AG04449 (cell line): ENCODE measurements at regions of chr10 and their contacts with region 1.

Region 1: DNA sequence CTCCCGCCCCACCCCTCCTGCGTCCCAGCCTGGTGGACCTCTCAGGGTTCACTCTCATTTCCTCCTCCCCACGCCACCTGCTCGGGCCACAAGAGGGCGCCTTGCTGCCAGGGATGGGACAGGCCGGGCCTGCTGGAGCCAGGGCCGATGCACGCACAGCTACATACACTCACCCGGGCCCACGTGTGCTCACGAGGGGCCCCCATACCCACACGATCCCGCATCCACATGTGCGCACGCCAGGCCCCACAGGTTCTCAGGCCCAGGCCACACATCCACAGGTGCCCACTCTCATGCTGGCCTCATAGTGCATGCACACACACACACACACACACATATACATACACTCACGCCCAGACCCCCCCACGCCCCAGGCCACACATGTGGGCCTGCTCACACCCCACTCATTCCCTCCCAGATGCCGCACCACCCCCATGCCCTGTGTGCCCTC is 68.6 kb downstream of the LHPP start:
- DNase-seq: peak; percentile 17
- H3K4me3 ChIP-seq: no peak overlapping the region
- CTCF ChIP-seq: peak; percentile 98

Region 2: DNA sequence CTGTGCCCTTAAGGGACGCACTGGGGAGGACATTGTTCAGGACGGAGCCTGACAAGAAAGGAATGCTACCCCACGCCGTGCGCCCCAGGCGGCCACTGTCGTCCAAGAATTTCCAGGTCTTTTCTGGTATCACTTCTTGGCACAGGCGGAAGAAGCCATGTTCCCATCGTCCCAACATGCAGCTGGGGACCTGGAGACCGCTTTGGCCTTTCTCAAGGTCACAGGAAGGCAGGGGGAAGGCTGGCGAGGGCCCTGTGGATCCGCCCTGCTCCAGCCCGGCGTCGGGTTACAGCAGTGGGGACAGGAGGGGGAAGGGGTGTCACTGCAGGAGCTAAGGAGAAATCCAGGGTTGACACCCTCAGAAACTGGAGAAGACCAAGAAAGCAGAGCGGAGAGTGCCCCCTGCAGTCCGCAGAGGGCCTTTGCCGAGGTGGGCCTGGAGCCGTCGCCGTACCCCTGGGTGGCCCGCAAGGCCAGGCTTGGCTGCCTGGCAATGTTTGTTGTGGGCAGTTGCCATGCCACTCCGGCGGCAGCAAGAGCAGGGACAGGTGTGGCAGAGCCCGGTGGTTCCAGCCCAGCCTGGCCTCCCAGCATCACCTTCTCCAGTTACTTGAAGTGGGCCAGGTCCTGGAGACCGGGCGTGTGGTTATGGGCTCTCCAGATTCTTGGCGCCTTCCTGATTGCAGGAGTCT is 35.5 kb after region 1 on chr10:
- CTCF ChIA-PET with region 1: interaction called, 10 read pairs
- POLR2A ChIA-PET with region 1: no interaction called
- DNase-seq: no peak
- H3K4me3 ChIP-seq: no peak overlapping the region
- CTCF ChIP-seq: peak; percentile 24

Region 3: GRCh38 chr10:124827474-124827873 is 297.2 kb after region 1 on chr10:
- CTCF ChIA-PET with region 1: interaction called, 94 read pairs
- POLR2A ChIA-PET with region 1: no interaction called
- DNase-seq: no peak
- H3K4me3 ChIP-seq: no peak overlapping the region
- CTCF ChIP-seq: no peak